Activated CD4-positive, alpha-beta T cell treated with anti-CD3 and anti-CD28 coated beads for 36 hours (primary cell): ENCODE measurements at regions of chr10 and their contacts with region 1.

Region 1: GRCh38 chr10:68526626-68527307 is 556 bp downstream of the SLC25A16 start:
- DNase-seq: no peak
- ATAC-seq: peak; percentile 16
- H3K4me3 Mint-ChIP-seq: peak overlapping the region; percentile 93
- H3K27ac Mint-ChIP-seq: peak overlapping the region; percentile 88
- H3K4me1 Mint-ChIP-seq: peaks cover 9% of the 10 kb centered on the region
- H3K27me3 Mint-ChIP-seq: no peaks in the 10 kb centered on the region

Region 2: GRCh38 chr10:67657775-67658174 is 869.0 kb before region 1 on chr10:
- CTCF ChIA-PET with region 1: no interaction called
- POLR2A ChIA-PET with region 1: no interaction called
- intact Hi-C with region 1: no loop called
- DNase-seq: no peak
- ATAC-seq: no peak
- H3K4me3 Mint-ChIP-seq: no peak overlapping the region
- H3K27ac Mint-ChIP-seq: no peak overlapping the region
- H3K4me1 Mint-ChIP-seq: no peaks in the 10 kb centered on the region
- H3K27me3 Mint-ChIP-seq: peaks cover 9% of the 10 kb centered on the region

Region 3: DNA sequence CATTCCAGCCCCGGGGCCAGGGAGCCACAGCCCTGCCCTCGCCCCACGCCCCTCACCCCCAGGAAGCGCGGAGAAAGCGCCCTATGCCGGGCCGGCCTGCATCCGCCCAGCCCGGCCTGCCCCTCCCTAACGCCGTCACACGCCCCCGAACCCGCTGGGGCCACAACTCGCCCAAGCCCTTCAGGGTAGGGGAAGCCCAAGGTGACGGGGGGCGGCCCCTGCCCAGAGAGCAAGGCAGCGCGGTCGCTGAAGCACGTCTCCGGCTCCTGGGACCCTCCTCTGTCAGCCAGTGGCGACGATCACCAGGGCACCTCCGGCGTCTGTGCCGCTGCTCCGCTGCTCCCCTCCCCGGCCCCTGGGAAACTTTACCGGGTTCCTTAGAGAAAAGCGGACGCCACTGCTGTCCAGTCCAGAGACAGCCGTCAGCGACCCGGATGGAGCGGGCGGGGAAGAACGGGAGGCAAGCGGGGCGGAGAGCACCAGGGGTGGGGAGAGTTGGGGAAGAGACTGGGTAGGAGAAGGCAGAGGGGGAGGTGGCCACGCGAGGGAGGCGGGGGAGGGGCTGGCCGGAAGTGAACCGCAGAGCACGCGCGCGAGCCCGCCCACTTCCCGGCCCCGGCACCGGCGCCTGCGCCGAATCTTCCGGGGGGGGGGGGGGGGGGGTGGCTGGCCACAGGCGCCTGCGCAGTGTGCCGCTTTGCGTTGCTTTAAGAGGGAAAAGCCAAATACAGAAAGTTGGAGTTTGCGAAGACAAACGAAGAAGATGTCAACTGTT is 451.8 kb before region 1 on chr10 and contains the start of gene HERC4:
- CTCF ChIA-PET with region 1: no interaction called
- POLR2A ChIA-PET with region 1: no interaction called
- intact Hi-C with region 1: loop called in 1 of 2 experiments (anchors 5 kb)
- DNase-seq: peak; percentile 94
- ATAC-seq: peak; percentile 83
- H3K4me3 Mint-ChIP-seq: peak within 1 kb of the TSS; percentile 98
- H3K27ac Mint-ChIP-seq: peak within 1 kb of the TSS; percentile 93
- H3K4me1 Mint-ChIP-seq: peaks cover 31% of the 10 kb centered on the region
- H3K27me3 Mint-ChIP-seq: no peaks in the 10 kb centered on the region
- total RNA-seq, gene HERC4: 39.5 to 50.8 TPM

Region 4: DNA sequence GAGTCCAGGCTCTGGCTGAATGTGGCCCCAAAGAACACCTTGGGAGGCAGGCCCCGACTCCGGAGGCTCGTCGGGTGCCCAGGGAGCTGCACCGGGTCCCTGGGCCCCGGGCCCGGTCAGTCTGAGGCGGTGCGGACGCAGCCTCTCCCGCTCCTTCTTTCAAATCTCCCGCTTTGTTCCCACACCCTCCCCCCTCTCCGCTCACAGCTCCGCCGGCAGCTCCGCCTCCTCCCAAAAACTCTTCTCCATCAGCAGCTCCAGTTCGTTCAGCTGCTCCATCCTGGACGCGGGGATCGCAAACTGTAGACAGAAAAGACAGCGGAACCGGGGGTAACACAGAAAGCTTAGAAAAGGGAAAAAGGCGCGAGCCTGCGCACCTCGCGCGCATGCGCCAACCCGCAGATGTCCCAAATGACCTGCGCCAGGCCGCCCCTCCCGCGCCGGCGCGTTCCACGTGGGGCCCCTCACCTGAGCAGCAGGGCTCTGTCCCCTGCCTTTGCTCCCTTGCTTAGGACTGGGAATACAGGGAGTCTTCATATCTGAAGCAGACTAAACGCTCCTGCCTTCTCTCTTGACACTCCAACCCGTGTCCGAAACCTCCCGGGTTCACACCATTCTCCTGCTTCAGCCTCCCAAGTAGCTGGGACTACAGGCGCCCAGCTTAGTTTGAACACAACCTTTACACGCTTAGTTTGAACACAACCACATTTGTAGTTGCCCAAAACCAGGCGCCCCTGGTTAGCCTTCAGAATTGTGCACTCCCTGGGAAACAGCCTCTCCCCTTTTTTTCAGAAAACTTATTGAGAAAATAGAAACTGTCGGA is 55.0 kb before region 1 on chr10 and contains the start of gene DNA2:
- CTCF ChIA-PET with region 1: no interaction called
- POLR2A ChIA-PET with region 1: no interaction called
- intact Hi-C with region 1: loop called in 1 of 2 experiments (anchors 1 kb)
- DNase-seq: peak; percentile 89
- ATAC-seq: peak; percentile 95
- H3K4me3 Mint-ChIP-seq: peak within 1 kb of the TSS; percentile 92
- H3K27ac Mint-ChIP-seq: peak within 1 kb of the TSS; percentile 91
- H3K4me1 Mint-ChIP-seq: peaks cover 22% of the 10 kb centered on the region
- H3K27me3 Mint-ChIP-seq: no peaks in the 10 kb centered on the region
- total RNA-seq, gene DNA2: 27.3 to 28.9 TPM

Region 5: GRCh38 chr10:68784476-68784875 is 257.7 kb after region 1 on chr10:
- CTCF ChIA-PET with region 1: no interaction called
- POLR2A ChIA-PET with region 1: no interaction called
- intact Hi-C with region 1: no loop called
- DNase-seq: no peak
- ATAC-seq: no peak
- H3K4me3 Mint-ChIP-seq: no peak overlapping the region
- H3K27ac Mint-ChIP-seq: no peak overlapping the region
- H3K4me1 Mint-ChIP-seq: no peaks in the 10 kb centered on the region
- H3K27me3 Mint-ChIP-seq: no peaks in the 10 kb centered on the region

Region 6: DNA sequence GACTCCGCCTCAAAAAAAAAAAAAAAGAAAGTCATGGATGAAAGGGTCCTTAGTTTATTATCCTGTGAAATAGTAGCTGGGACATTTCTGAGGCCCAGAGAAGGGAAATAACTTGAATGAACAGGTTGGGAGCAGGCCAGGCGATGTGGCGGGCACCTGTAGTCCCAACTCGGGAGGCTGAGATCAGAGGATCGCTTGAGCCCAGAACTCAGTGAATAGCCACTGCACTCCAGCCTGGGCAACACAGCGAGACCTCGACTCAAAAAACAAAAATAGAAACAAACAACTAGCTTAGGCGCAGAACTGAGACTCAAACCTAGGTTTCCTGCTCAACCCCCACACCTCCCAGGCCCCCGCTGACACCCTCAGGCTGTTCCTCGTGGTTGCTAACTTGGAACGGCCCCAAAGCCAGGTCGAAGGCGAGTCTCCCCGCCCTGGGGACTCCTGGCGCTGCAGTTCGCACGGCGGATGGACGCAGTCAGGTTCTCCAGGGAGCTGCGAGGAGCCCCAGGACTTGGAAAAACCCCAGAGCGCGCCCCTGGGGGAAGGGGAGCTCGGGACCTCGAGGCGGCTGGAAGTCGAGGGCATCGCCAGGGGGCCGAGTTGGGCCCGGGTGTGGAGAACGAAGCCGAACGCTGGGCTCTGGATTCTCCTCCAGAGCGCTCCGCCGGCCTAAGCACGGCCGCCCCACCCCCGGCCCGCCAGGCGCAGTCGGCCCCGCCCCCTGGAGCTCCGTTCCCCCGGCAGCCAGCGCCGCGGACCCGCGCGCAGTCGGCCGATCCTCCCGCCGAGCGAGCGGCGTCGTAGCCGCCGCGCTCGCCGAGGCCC is 300.2 kb after region 1 on chr10 and contains the start of gene STOX1:
- CTCF ChIA-PET with region 1: interaction called, 4 read pairs
- POLR2A ChIA-PET with region 1: no interaction called
- intact Hi-C with region 1: loop called in 1 of 2 experiments (anchors 1 kb)
- DNase-seq: peak; percentile 81
- ATAC-seq: peak; percentile 89
- H3K4me3 Mint-ChIP-seq: peak within 1 kb of the TSS; percentile 72
- H3K27ac Mint-ChIP-seq: peak within 1 kb of the TSS; percentile 37
- H3K4me1 Mint-ChIP-seq: peaks cover 19% of the 10 kb centered on the region
- H3K27me3 Mint-ChIP-seq: no peaks in the 10 kb centered on the region
- total RNA-seq, gene STOX1: 0.74 to 0.87 TPM

Region 7: DNA sequence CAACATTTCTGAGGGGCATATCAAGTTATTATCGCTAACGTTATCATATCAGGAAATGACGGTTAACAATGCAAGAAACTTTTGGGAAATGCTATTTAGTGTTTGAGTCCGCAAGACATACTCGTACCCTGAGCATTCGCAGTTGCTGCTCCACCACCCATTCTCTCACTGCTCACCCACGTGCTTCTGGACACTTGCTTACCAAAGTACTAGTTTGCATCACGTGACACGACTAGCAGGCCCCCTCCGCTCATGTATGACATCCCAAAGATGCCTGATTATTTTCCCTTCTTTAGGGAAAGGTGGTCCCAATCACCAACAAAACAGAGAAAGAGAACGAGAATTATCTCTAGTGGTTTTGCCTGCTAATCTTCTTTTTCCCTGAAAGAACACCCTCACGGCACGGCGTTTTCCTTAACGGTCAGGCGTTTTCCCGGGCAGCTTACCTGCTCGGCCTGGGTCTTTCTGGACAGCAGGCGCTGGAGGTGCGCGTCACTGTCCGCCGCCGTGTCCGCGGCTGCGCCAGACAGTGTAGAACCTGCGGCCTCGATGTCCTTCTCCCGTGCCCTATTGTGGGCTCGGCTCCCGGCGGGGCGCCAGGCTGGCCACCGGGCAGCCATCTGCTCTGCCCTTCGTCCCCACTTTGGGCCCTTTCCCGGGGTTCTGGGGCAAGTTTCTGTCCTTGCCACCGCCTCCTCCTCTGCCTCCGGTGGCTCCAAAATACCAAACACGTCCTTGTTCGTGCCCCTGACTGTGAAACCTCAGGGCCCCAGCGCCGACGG is 653.2 kb after region 1 on chr10 and contains the start of gene SUPV3L1:
- CTCF ChIA-PET with region 1: no interaction called
- POLR2A ChIA-PET with region 1: no interaction called
- intact Hi-C with region 1: loop called in 1 of 2 experiments (anchors 2 kb)
- DNase-seq: peak; percentile 91
- ATAC-seq: peak; percentile 89
- H3K4me3 Mint-ChIP-seq: peak within 1 kb of the TSS; percentile 90
- H3K27ac Mint-ChIP-seq: peak within 1 kb of the TSS; percentile 100
- H3K4me1 Mint-ChIP-seq: peaks cover 38% of the 10 kb centered on the region
- H3K27me3 Mint-ChIP-seq: no peaks in the 10 kb centered on the region
- total RNA-seq, gene SUPV3L1: 46.6 to 54.1 TPM